Panc1 (cell line): ENCODE measurements at regions of chr5 and their contacts with region 1.

Region 1: GRCh38 chr5:135551593-135552447 is 16.1 kb upstream of the NEUROG1 start:
- DNase-seq: peak; percentile 43
- ATAC-seq: peak; percentile 88
- H3K4me3 ChIP-seq: no peak overlapping the region
- H3K27ac ChIP-seq: no peak overlapping the region
- H3K4me1 ChIP-seq: no peaks in the 10 kb centered on the region
- H3K27me3 ChIP-seq: peaks cover 10% of the 10 kb centered on the region
- CTCF ChIP-seq: peak; percentile 88

Region 2: GRCh38 chr5:135457424-135458071 is 94.3 kb before region 1 on chr5:
- CTCF ChIA-PET with region 1: interaction called, 13 read pairs
- POLR2A ChIA-PET with region 1: interaction called, 15 read pairs
- in situ Hi-C with region 1: no loop called
- intact Hi-C with region 1: no loop called
- DNase-seq: no peak
- ATAC-seq: peak; percentile 88
- H3K4me3 ChIP-seq: no peak overlapping the region
- H3K27ac ChIP-seq: no peak overlapping the region
- H3K4me1 ChIP-seq: 0 out of 2 replicates have a peak, but pooled peaks cover 4% of the 10 kb centered on the region
- H3K27me3 ChIP-seq: peaks cover 15% of the 10 kb centered on the region
- CTCF ChIP-seq: peak; percentile 93

Region 3: DNA sequence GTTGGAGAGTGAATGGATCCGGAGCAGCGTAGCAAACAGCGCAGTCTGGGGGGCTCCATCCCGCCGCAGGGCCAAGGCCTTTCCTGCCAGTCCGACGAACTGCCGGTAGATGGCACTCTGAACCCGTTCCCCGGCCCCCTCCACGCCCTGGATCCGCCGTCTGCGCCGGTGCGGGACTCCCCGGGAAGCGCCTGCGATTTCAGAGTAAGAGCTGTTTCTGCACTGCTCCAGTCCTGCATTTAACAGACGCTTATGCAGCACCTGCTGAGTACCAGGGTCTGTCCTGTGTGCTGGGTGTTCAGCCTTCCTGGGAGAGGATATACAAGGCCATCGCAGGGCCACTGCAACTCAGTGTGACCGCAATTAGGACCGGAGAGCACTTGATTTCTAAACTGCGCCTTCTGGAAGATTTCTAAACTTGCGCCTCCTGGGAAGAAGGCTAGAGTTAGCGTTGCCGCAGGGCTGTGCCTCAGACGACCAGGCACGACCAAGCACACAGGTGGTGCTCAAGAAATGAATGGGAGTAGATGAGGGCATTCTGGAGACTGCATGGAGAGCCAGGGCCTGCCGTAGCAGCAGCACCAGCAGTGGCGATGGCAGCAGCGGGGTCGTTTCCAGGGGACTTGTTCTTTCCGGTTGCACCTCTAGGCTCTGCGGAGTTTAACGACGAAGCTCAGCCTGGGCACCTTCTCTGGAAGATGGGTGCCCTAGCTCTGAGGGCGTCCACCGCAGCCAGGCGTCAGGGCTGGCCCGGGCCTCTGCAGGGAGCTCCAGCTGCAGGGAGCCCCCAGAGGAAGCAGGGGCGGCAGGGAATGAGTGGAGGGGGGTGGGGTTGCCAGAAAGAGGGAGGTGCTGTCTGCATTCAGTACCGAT is 85.4 kb before region 1 on chr5:
- CTCF ChIA-PET with region 1: interaction called, 40 read pairs
- POLR2A ChIA-PET with region 1: interaction called, 4 read pairs
- in situ Hi-C with region 1: no loop called
- intact Hi-C with region 1: loop called (anchors 1 kb)
- DNase-seq: no peak
- ATAC-seq: peak; percentile 94
- H3K4me3 ChIP-seq: no peak overlapping the region
- H3K27ac ChIP-seq: no peak overlapping the region
- H3K4me1 ChIP-seq: peaks cover 2% of the 10 kb centered on the region; the same call in 1 of the 2 replicates
- H3K27me3 ChIP-seq: peaks cover 18% of the 10 kb centered on the region
- CTCF ChIP-seq: peak; percentile 95

Region 4: GRCh38 chr5:135565725-135566421 is 14.1 kb after region 1 on chr5:
- CTCF ChIA-PET with region 1: interaction called, 23 read pairs
- POLR2A ChIA-PET with region 1: no interaction called
- in situ Hi-C with region 1: no loop called
- intact Hi-C with region 1: no loop called
- DNase-seq: peak; percentile 43
- ATAC-seq: peak; percentile 83
- H3K4me3 ChIP-seq: no peak overlapping the region
- H3K27ac ChIP-seq: no peak overlapping the region
- H3K4me1 ChIP-seq: no peaks in the 10 kb centered on the region
- H3K27me3 ChIP-seq: peaks cover 4% of the 10 kb centered on the region; the same call in 1 of the 2 replicates
- CTCF ChIP-seq: peak; percentile 94